Testis (tissue), 5 donors: ENCODE measurements at regions of chr12 and their contacts with region 1.

Region 1: GRCh38 chr12:46372544-46373110 is at the start of gene SLC38A2:
- DNase-seq: peak; percentile 99
- H3K4me3 ChIP-seq: peak within 1 kb of the TSS; percentile 88 to 99
- H3K27ac ChIP-seq: peak within 1 kb of the TSS; percentile 97 to 100
- H3K4me1 ChIP-seq: peaks cover 21% of the 10 kb centered on the region
- H3K27me3 ChIP-seq: no peaks in the 10 kb centered on the region
- CTCF ChIP-seq: no peak
- POLR2A ChIP-seq: peak; percentile 88
- total RNA-seq, gene SLC38A2: 151 to 220 TPM

Region 2: GRCh38 chr12:46108721-46109120 is 263.9 kb before region 1 on chr12:
- intact Hi-C with region 1: no loop called
- DNase-seq: no peak
- H3K4me3 ChIP-seq: no peak overlapping the region
- H3K27ac ChIP-seq: no peak overlapping the region
- H3K4me1 ChIP-seq: no peaks in the 10 kb centered on the region
- H3K27me3 ChIP-seq: no peaks in the 10 kb centered on the region
- CTCF ChIP-seq: no peak
- POLR2A ChIP-seq: no peak

Region 3: GRCh38 chr12:46661110-46661845 is 288.7 kb after region 1 on chr12:
- intact Hi-C with region 1: loop called (anchors 10 kb)
- DNase-seq: peak; percentile 58
- H3K4me3 ChIP-seq: no peak overlapping the region
- H3K27ac ChIP-seq: peak overlapping the region in 1 of 2 donors; percentile 79
- H3K4me1 ChIP-seq: peaks cover 9% of the 10 kb centered on the region
- H3K27me3 ChIP-seq: no peaks in the 10 kb centered on the region
- CTCF ChIP-seq: peak; percentile 72 to 82 (median 72)
- POLR2A ChIP-seq: peak; percentile 7